ENCODE measurements at regions of chr2 and their contacts with region 1.

Region 1: DNA sequence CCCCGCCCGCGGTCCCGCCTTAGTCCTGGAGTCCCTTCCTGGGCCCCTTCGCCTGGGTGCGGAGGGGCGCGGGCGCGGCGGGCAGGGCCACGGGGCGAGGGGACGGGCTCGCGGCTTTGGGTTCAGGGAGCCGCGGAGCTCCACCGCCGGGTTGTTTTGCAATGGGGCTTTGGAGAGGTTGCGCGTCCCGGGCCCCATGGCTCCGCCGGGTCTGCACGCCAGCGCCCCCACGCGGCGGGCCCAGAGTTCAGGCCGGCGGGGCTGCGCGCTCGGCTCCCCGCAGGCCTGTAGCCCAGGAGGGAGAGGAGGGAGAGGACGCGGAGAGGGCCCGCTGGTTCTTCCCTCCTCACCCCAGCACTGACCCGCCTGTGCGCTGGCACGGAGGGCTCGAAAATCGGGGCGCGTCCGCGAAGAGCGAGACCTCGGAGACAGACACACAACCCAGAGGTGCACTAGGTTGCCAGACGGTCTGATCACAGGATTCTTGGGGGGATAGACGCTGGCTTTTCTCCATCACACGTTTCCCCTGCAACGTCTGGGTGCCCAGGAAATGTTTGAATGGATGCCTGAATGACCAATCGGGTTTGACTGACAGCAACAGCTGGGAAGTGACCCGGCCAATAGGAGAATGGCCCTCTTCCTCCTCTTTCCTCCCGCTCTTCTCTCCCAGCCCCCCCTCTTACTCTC is 4.9 kb upstream of the SIX2 start:
- DNase-seq: peak; percentile 82 to 91
- ATAC-seq: peak; percentile 74
- H3K4me3 ChIP-seq: peak overlapping the region; percentile 40 to 66
- H3K27ac ChIP-seq: peak overlapping the region in 1 of 2 donors; percentile 52
- H3K4me1 ChIP-seq: no peaks in the 10 kb centered on the region
- H3K27me3 ChIP-seq: no peaks in the 10 kb centered on the region

Region 2: GRCh38 chr2:44981136-44982108 is 32.7 kb before region 1 on chr2:
- intact Hi-C with region 1: loop called in 1 of 2 experiments (anchors 2 kb)
- DNase-seq: peak; percentile 81 to 92
- ATAC-seq: peak; percentile 83
- H3K4me3 ChIP-seq: no peak overlapping the region
- H3K27ac ChIP-seq: no peak overlapping the region
- H3K4me1 ChIP-seq: no peaks in the 10 kb centered on the region
- H3K27me3 ChIP-seq: no peaks in the 10 kb centered on the region

Region 3: GRCh38 chr2:45315861-45316260 is 301.7 kb after region 1 on chr2:
- intact Hi-C with region 1: no loop called
- DNase-seq: no peak
- ATAC-seq: no peak
- H3K4me3 ChIP-seq: no peak overlapping the region
- H3K27ac ChIP-seq: no peak overlapping the region
- H3K4me1 ChIP-seq: no peaks in the 10 kb centered on the region
- H3K27me3 ChIP-seq: no peaks in the 10 kb centered on the region

Region 4: GRCh38 chr2:45585267-45585861 is 571.2 kb after region 1 on chr2:
- intact Hi-C with region 1: loop called in 1 of 2 experiments (anchors 10 kb)
- DNase-seq: no peak
- ATAC-seq: peak; percentile 64
- H3K4me3 ChIP-seq: no peak overlapping the region
- H3K27ac ChIP-seq: no peak overlapping the region
- H3K4me1 ChIP-seq: no peaks in the 10 kb centered on the region
- H3K27me3 ChIP-seq: no peaks in the 10 kb centered on the region

Measured in aorta (tissue), 5 donors.